Left ventricle myocardium inferior (tissue), 1 donor: ENCODE measurements at regions of chr3 and their contacts with region 1.

Region 1: DNA sequence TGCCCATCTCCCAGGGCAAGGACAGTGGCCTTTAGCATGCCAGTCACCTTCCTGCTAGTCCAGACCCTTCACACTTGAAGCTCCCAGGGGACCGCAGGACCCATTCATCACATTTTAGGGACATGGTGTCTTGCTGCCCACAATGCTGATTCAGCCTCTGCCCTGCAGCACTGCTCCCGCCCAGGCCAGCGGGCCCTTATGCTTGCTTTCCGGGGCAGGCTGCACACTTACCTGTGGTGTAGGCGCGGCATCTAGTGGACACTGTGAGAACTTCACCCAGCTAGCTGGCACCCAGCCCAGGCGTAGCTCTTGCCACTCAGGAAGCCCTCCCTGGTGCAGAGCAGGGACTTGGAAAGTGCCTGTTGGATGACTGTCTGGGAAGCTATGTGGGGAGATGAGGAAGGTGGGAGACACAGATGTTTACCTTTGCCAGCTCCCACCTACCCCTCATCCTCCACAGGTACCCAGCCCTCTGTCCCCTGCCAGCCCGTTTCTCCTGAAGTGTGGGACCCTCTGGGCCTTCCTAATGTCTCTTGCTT is 26.2 kb upstream of the NR2C2 start:
- DNase-seq: peak; percentile 89
- H3K4me3 ChIP-seq: no peak overlapping the region
- H3K27ac ChIP-seq: no peak overlapping the region
- H3K4me1 ChIP-seq: peaks cover 9% of the 10 kb centered on the region
- H3K27me3 ChIP-seq: peaks cover 4% of the 10 kb centered on the region
- CTCF ChIP-seq: peak; percentile 98

Region 2: GRCh38 chr3:14791343-14791945 is 129.7 kb before region 1 on chr3:
- intact Hi-C with region 1: loop called (anchors 5 kb)
- DNase-seq: peak; percentile 64
- H3K4me3 ChIP-seq: no peak overlapping the region
- H3K27ac ChIP-seq: no peak overlapping the region
- H3K4me1 ChIP-seq: peaks cover 42% of the 10 kb centered on the region
- H3K27me3 ChIP-seq: peaks cover 45% of the 10 kb centered on the region
- CTCF ChIP-seq: peak; percentile 84